HepG2 (cell line): ENCODE measurements at regions of chr12 and their contacts with region 1.

Region 1: DNA sequence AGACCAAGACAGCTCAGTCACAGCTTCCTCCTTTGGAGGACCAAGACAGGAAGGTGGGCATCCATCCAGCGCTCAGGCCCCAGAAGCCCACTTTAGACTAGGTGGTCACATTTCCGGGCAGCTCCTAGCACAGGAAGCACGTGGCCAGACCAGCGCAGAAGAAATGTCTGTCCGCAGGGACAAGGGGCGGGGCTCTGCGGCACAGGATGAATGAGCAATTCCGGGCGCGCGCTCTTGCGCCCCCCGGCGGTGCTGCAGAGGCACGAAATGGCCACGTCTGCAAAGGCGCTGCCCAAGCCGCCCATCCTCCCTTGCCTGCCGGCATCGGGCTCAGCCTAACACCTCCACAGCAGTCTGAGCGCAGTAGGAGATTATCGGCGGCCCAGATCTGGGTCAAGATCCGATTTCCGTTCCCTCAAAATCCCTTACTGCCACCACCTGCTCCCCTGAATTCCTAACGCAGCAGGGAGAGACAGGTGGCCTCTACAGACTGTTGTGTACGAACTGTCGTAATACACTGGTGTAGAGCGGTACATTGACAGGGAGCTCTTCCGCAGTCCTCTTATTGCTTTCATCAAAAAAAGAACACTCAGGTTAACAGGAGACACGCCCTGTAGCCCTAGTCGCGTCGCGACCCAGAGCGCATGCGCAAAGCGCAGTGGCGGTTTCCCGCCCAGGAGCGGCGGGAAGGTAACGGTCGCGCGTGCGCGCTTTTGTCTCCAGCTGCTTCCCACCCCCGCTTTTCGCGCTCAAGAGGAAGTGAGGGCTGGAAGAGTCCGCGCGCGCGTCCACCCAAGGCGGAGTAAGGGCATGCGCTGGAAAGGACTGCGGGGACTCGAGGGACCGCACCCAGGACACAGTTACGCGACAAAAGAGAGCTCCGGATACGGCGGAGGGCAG is 794 bp downstream of the TUBA1B start:
- DNase-seq: peak; percentile 85
- ATAC-seq: peak; percentile 74
- H3K4me3 ChIP-seq: peak overlapping the region; percentile 72 to 94 (median 82)
- H3K27ac ChIP-seq: peak overlapping the region; percentile 96
- H3K4me1 ChIP-seq: peaks cover 45% of the 10 kb centered on the region
- H3K27me3 ChIP-seq: no peaks in the 10 kb centered on the region
- CTCF ChIP-seq: peak; percentile 97
- EP300 ChIP-seq: peak in 1 of 2 experiments; percentile 65; a peak in 1 of 4 replicates
- POLR2A ChIP-seq: peak; percentile 13 to 76; a peak in 3 of 4 replicates
- RAD21 ChIP-seq: peak; percentile 76

Region 2: DNA sequence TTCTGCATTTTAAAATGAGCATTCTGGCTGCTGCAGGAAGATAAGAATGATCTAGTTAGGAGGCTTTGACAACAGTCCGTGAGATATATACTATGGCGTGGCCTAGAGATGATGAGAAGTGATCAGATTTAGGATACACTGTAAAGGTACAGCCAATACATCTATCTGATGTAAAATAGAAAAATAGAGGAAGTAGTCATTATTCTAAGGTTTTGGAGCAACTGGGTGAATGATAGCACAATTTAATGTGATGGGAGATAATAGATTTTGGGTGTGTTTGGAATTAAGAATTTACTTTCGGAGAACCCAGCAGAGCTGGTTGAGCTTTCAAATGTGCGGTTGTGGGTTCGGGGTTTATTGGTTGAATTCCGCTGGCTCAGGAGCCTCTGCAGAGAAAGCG is 658.1 kb before region 1 on chr12 and contains the start of gene ANP32D:
- CTCF ChIA-PET with region 1: no interaction called
- POLR2A ChIA-PET with region 1: no interaction called
- in situ Hi-C with region 1: no loop called
- intact Hi-C with region 1: no loop called
- DNase-seq: no peak
- ATAC-seq: no peak
- H3K4me3 ChIP-seq: no peak within 1 kb of the TSS
- H3K27ac ChIP-seq: no peak within 1 kb of the TSS
- H3K4me1 ChIP-seq: no peaks in the 10 kb centered on the region
- H3K27me3 ChIP-seq: 0 out of 5 replicates have a peak, but pooled peaks cover 0 to 4% of the 10 kb centered on the region in 2 experiments
- CTCF ChIP-seq: no peak
- EP300 ChIP-seq: no peak
- POLR2A ChIP-seq: no peak
- RAD21 ChIP-seq: no peak
- total RNA-seq, gene ANP32D: not detected in 2 replicates

Region 3: GRCh38 chr12:48826209-48826894 is 304.0 kb before region 1 on chr12:
- CTCF ChIA-PET with region 1: no interaction called
- POLR2A ChIA-PET with region 1: no interaction called
- in situ Hi-C with region 1: no loop called
- intact Hi-C with region 1: no loop called
- DNase-seq: no peak
- ATAC-seq: no peak; the same call in 2 of the 3 replicates
- H3K4me3 ChIP-seq: no peak overlapping the region
- H3K27ac ChIP-seq: no peak overlapping the region
- H3K4me1 ChIP-seq: no peaks in the 10 kb centered on the region
- H3K27me3 ChIP-seq: peaks cover 4 to 44% of the 10 kb centered on the region in 2 experiments; a peak in 4 of 5 replicates
- CTCF ChIP-seq: no peak
- EP300 ChIP-seq: no peak
- POLR2A ChIP-seq: no peak
- RAD21 ChIP-seq: no peak

Region 4: DNA sequence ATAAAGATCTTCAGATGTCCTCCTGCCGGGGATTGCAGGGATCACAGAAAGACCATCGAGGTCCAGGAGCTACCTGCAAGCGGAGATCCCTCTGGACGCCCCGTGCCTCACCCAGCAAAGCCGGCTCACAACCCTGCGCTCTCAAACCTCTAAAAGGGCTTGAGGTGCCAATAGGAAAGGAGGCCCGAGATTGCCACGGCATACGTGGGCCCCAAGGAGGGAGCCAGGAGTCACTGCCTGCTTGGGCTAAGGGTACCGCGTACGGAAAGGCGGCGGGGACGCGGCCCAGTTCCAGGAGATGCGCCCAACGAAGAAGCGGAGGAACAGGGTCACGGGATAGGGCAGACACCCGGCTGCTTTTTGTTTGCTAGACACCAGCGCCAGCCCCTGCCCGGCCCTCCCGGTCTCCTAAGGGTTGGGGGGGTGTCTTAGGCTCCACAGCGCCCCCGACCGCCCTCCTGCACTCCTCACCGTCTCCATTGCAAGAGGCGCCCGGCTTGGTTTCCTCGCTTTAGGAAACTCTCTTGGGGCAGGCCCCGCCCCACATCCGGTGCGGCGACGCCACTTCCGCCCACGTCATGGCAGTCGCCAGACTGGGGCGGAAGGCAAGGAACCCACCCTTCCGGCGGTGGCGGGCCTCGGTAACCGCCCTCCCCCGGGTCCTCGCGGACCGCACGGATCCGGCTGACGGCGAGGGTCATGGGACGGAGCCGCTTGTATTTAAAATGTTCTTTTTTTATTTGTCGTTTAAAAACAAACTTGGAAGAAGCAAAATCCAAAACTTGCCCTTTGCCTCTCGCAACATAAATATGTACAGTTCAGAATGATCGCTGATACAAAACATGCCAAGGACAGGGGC is 111.9 kb before region 1 on chr12 and contains the start of gene PRKAG1:
- CTCF ChIA-PET with region 1: no interaction called
- POLR2A ChIA-PET with region 1: interaction called, 3 read pairs
- in situ Hi-C with region 1: no loop called
- intact Hi-C with region 1: loop called (anchors 5 kb)
- DNase-seq: peak; percentile 91
- ATAC-seq: peak; percentile 89
- H3K4me3 ChIP-seq: peak within 1 kb of the TSS; percentile 74 to 93 (median 85)
- H3K27ac ChIP-seq: peak within 1 kb of the TSS; percentile 86
- H3K4me1 ChIP-seq: peaks cover 20% of the 10 kb centered on the region
- H3K27me3 ChIP-seq: no peaks in the 10 kb centered on the region
- CTCF ChIP-seq: peak; percentile 83
- EP300 ChIP-seq: peak in 1 of 2 experiments; percentile 24; a peak in 1 of 4 replicates
- POLR2A ChIP-seq: peak; percentile 78 to 82
- RAD21 ChIP-seq: peak; percentile 25; the same call in 1 of the 2 replicates
- total RNA-seq, gene PRKAG1: 32.8 and 37.6 TPM in 2 replicates

Region 5: GRCh38 chr12:49069507-49070346 is 60.7 kb before region 1 on chr12 and contains the start of gene RHEBL1:
- CTCF ChIA-PET with region 1: no interaction called
- POLR2A ChIA-PET with region 1: interaction called, 25 read pairs
- in situ Hi-C with region 1: no loop called
- intact Hi-C with region 1: no loop called
- DNase-seq: peak; percentile 94
- ATAC-seq: peak; percentile 99
- H3K4me3 ChIP-seq: peak within 1 kb of the TSS; percentile 73 to 85 (median 80)
- H3K27ac ChIP-seq: peak within 1 kb of the TSS; percentile 54
- H3K4me1 ChIP-seq: peaks cover 24% of the 10 kb centered on the region
- H3K27me3 ChIP-seq: no peaks in the 10 kb centered on the region
- CTCF ChIP-seq: peak; percentile 56
- EP300 ChIP-seq: no peak
- POLR2A ChIP-seq: peak in 1 of 2 experiments; percentile 50; a peak in 2 of 4 replicates
- RAD21 ChIP-seq: 0 out of 2 replicates have a peak, but pooled peaks have one; percentile 11
- total RNA-seq, gene RHEBL1: 1.4 and 1.6 TPM in 2 replicates

Region 6: DNA sequence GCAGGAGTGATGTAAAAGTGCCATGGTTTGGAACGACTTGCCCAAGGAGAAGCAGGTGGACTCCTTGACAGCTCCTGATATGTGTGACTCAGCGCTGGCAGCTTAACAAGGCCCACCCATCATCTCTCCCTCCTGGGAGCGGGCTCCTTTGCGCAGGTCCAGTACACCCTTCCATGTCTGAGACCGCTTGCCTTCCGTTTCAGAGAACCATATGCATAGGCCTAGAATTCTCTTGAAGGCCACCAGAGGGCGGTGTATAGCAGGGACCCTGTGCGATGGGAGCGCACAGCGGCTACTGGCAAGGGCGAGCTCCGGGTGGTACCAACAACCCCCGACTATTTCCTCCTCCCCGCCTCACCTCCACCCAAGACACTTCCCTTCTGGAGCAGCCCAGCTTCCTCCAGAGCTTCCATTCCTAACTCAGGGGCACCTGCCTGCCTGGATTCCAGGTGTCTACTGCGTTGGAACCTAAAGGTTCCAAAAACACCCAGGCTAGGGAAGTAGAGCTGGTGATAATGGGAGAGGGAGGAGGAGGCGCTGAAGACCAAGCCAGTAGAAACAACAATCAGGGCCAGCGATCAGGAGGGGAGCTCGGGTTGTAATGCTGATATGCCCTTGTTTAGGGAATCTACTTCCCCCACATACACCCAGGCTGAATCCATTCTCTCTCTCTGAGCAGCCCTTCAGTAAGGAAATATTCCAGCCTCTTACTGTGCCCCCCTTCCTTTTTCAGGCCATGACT is 42.0 kb before region 1 on chr12:
- CTCF ChIA-PET with region 1: interaction called, 8 read pairs
- POLR2A ChIA-PET with region 1: interaction called, 16 read pairs
- in situ Hi-C with region 1: no loop called
- intact Hi-C with region 1: no loop called
- DNase-seq: peak; percentile 73
- ATAC-seq: peak; percentile 84
- H3K4me3 ChIP-seq: peak overlapping the region in 1 of 3 experiments; percentile 36; a peak in 1 of 6 replicates
- H3K27ac ChIP-seq: no peak overlapping the region
- H3K4me1 ChIP-seq: peaks cover 47% of the 10 kb centered on the region
- H3K27me3 ChIP-seq: peaks cover 9 to 54% of the 10 kb centered on the region in 2 experiments; a peak in 4 of 5 replicates
- CTCF ChIP-seq: peak; percentile 92
- EP300 ChIP-seq: no peak
- POLR2A ChIP-seq: no peak
- RAD21 ChIP-seq: peak; percentile 72

Region 7: GRCh38 chr12:49110464-49111155 is 19.8 kb before region 1 on chr12 and contains the start of gene LMBR1L:
- CTCF ChIA-PET with region 1: no interaction called
- POLR2A ChIA-PET with region 1: interaction called, 57 read pairs
- in situ Hi-C with region 1: no loop called
- intact Hi-C with region 1: no loop called
- DNase-seq: peak; percentile 97
- ATAC-seq: peak; percentile 98
- H3K4me3 ChIP-seq: peak within 1 kb of the TSS; percentile 75 to 95 (median 87)
- H3K27ac ChIP-seq: peak within 1 kb of the TSS; percentile 58
- H3K4me1 ChIP-seq: peaks cover 21% of the 10 kb centered on the region
- H3K27me3 ChIP-seq: no peaks in the 10 kb centered on the region; a peak in 1 of 5 replicates
- CTCF ChIP-seq: peak; percentile 33; the same call in 1 of the 2 replicates
- EP300 ChIP-seq: no peak
- POLR2A ChIP-seq: peak; percentile 27 to 83; a peak in 3 of 4 replicates
- RAD21 ChIP-seq: no peak; the same call in 1 of the 2 replicates
- total RNA-seq, gene LMBR1L: 7.3 and 12.2 TPM in 2 replicates

Region 8: GRCh38 chr12:49232940-49233841 is 102.8 kb after region 1 on chr12:
- CTCF ChIA-PET with region 1: no interaction called
- POLR2A ChIA-PET with region 1: interaction called, 13 read pairs
- in situ Hi-C with region 1: no loop called
- intact Hi-C with region 1: loop called (anchors 1 kb)
- DNase-seq: peak; percentile 30
- ATAC-seq: peak; percentile 78
- H3K4me3 ChIP-seq: peak overlapping the region in 2 of 3 experiments; percentile 33 to 54; a peak in 5 of 6 replicates
- H3K27ac ChIP-seq: no peak overlapping the region
- H3K4me1 ChIP-seq: peaks cover 27% of the 10 kb centered on the region
- H3K27me3 ChIP-seq: no peaks in the 10 kb centered on the region; a peak in 2 of 5 replicates
- CTCF ChIP-seq: peak; percentile 46
- EP300 ChIP-seq: no peak
- POLR2A ChIP-seq: no peak
- RAD21 ChIP-seq: no peak